Tibial artery (tissue), 4 donors: ENCODE measurements at regions of chr11 and their contacts with region 1.

Region 1: GRCh38 chr11:66677599-66678375 is at the start of gene RBM4B:
- DNase-seq: peak; percentile 97
- H3K4me3 ChIP-seq: peak within 1 kb of the TSS; percentile 63 to 84
- H3K27ac ChIP-seq: peak within 1 kb of the TSS; percentile 92 to 97
- H3K4me1 ChIP-seq: peaks cover 0 to 38% (median 20%) of the 10 kb centered on the region in 4 donors
- H3K27me3 ChIP-seq: no peaks in the 10 kb centered on the region
- CTCF ChIP-seq: no peak

Region 2: GRCh38 chr11:66421492-66422205 is 256.1 kb before region 1 on chr11:
- intact Hi-C with region 1: loop called (anchors 10 kb)
- DNase-seq: peak; percentile 90 to 95
- H3K4me3 ChIP-seq: no peak overlapping the region
- H3K27ac ChIP-seq: no peak overlapping the region
- H3K4me1 ChIP-seq: peaks cover 0 to 48% (median 39%) of the 10 kb centered on the region in 4 donors
- H3K27me3 ChIP-seq: peaks cover 0 to 3% of the 10 kb centered on the region in 2 donors
- CTCF ChIP-seq: no peak

Region 3: GRCh38 chr11:66579017-66579606 is 98.7 kb before region 1 on chr11:
- intact Hi-C with region 1: loop called (anchors 2 kb)
- DNase-seq: peak; percentile 64 to 88
- H3K4me3 ChIP-seq: peak overlapping the region in 1 of 2 donors; percentile 10
- H3K27ac ChIP-seq: no peak overlapping the region
- H3K4me1 ChIP-seq: peaks cover 0 to 6% (median 2%) of the 10 kb centered on the region in 4 donors
- H3K27me3 ChIP-seq: no peaks in the 10 kb centered on the region
- CTCF ChIP-seq: peak; percentile 78 to 89

Region 4: DNA sequence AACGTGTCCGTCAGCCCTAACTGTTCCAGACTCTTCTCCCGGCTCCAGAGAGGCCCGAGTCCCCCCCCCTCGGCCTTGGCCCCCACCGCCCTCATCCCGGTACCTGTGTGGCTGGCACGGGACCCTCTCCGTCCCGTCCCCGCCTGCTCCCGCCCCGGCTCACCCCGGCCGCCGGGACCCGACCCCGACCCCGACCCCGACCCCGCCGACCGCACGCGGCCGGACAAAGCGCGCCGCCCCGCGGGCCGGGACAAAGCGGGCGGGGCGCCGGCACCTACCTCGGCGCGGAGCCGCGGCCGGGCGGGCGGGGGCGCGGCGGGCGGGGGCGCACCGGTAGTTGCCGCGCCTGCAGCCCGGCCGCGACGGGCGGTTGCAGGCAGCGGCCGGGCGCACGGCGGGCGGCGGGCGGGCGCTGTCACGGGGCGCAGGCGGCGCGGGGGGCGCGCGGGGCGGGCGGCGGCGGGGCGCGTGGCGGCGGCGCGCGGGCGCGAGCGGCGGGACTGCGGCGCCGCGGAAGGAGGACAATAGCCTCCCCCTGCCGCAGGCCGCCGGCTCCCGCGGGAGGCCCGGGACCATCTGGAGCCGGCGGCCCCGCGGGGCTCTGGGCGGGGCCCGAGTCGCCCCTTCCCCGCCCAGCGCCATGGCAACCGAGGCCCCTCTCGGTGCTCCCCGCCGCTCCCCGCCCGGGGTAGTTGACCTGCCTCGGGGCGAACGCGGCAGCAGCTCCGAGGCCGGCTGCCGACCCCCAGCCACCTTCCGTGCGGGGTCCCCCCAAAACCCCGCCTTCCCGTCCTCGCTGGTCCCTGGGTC is 50.3 kb after region 1 on chr11:
- intact Hi-C with region 1: no loop called
- DNase-seq: no peak
- H3K4me3 ChIP-seq: peak overlapping the region; percentile 50 to 61
- H3K27ac ChIP-seq: no peak overlapping the region
- H3K4me1 ChIP-seq: peaks cover 0 to 22% (median 11%) of the 10 kb centered on the region in 4 donors
- H3K27me3 ChIP-seq: peaks cover 0 to 44% of the 10 kb centered on the region in 2 donors
- CTCF ChIP-seq: no peak